Right ventricle myocardium superior (tissue), 1 donor: ENCODE measurements at regions of chr6 and their contacts with region 1.

Region 1: GRCh38 chr6:137707590-137708360 is 159.3 kb upstream of the TNFAIP3 start:
- DNase-seq: no peak
- ATAC-seq: peak; percentile 75

Region 2: DNA sequence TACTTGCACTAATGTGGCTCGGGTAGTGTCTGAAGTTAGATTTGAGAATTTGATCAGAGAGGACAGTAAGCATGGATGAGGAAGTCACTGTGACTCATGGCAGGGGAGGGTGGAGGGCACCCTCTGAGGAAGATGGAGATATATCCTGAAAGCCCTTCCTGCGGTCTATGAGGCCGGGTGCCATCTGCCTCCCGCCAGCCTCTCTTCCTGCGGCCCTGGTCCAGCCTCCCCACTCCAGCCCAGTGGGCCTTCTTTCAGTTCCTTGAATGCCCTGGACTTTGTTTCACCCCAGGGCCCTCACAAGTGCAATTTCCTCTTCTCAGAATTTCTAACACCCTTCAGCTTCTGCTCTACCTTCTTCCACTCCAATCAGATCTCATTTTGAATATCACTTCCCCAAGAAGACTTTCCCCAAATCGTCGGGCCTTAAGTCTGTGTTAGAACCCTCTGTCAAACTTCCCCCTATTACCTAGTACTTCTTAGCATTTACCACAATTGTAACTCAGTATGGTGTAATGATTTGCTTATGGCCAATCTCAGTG is 139.1 kb after region 1 on chr6:
- intact Hi-C with region 1: no loop called
- DNase-seq: peak; percentile 76
- ATAC-seq: peak; percentile 82

Region 3: GRCh38 chr6:137866914-137867684 is 159.3 kb after region 1 on chr6 and contains the start of gene TNFAIP3:
- intact Hi-C with region 1: loop called (anchors 2 kb)
- DNase-seq: peak; percentile 95
- ATAC-seq: peak; percentile 93
- total RNA-seq, gene TNFAIP3: 4.6 TPM

Region 4: GRCh38 chr6:137944793-137945498 is 237.2 kb after region 1 on chr6:
- intact Hi-C with region 1: loop called (anchors 2 kb)
- DNase-seq: no peak
- ATAC-seq: peak; percentile 94

Region 5: GRCh38 chr6:138109042-138109997 is 401.5 kb after region 1 on chr6:
- intact Hi-C with region 1: loop called (anchors 10 kb)
- DNase-seq: peak; percentile 65
- ATAC-seq: no peak